ENCODE measurements at regions of chr13 and their contacts with region 1.

Region 1: GRCh38 chr13:99656092-99656745 is 154.9 kb downstream of the TM9SF2 start:
- DNase-seq: peak; percentile 48 to 91 (median 81)
- H3K4me3 ChIP-seq: peak overlapping the region in 24 of 59 donors; percentile 0 to 44 (median 12)
- H3K27ac ChIP-seq: peak overlapping the region in 9 of 59 donors; percentile 1 to 98 (median 38)
- H3K27me3 ChIP-seq: no peaks in the 10 kb centered on the region
- CTCF ChIP-seq: peak; percentile 83 to 98 (median 95)

Region 2: DNA sequence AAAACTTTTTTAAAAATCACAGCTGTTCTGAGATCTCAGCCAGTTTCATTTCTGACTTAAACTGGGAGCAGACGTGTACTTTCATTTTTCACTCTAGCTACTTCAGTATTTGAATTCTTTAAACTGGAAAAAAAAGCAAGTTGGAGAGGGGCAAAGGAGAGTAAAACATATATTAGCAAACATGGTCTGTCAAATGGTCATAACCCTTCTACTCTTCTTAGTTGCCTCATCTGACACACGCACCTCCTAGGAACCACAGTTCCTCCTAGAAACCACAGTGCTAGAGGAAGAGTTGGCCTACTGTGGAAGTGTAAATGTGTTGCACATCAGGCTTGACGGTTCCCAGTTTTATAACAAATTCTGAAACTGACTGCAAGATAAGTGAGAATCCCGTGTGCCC is 107.8 kb before region 1 on chr13:
- intact Hi-C with region 1: no loop called
- DNase-seq: no peak
- H3K4me3 ChIP-seq: no peak overlapping the region
- H3K27ac ChIP-seq: no peak overlapping the region
- H3K27me3 ChIP-seq: no peaks in the 10 kb centered on the region
- CTCF ChIP-seq: no peak

Region 3: DNA sequence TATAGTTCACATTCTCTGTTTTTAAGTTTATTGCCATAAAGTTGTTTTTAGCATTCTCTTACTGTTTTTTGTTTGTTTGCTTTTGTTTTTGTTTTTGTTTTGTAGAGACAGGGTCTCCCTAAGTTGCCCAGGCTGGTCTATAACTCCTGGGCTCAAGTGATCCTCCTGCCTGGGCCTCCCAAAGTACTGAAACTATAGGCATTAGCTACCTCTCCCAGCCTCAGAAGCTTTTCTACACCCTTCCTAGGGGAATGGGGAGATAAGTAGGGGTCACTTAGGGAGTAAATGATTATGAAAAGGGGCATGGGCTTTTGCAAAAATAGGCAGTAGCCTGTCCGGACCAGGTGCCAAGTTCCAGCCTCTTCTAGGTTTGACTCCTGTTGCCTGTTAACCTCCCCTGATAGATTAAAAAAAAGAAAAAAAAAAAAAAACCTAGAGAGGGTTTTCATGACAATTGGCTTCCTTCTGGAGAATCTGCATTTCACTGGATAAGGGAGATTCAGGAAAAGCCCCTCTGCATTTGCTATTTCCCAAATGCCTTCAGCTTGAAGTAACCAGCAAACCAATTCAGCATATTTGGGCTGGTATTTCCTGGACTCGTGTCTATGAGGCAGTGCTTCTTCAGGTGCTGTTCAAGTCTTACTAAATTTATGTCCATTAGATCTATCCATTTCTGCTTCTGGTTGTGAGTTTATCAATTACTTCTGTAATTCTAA is 61.9 kb after region 1 on chr13:
- intact Hi-C with region 1: no loop called
- DNase-seq: no peak
- H3K4me3 ChIP-seq: no peak overlapping the region
- H3K27ac ChIP-seq: no peak overlapping the region
- H3K27me3 ChIP-seq: no peaks in the 10 kb centered on the region
- CTCF ChIP-seq: no peak

Region 4: GRCh38 chr13:100088644-100089464 is 432.6 kb after region 1 on chr13 and contains the start of gene PCCA:
- intact Hi-C with region 1: loop called in 1 of 2 experiments (anchors 2 kb)
- DNase-seq: peak; percentile 90 to 97 (median 95)
- H3K4me3 ChIP-seq: peak within 1 kb of the TSS; percentile 67 to 100 (median 94)
- H3K27ac ChIP-seq: peak within 1 kb of the TSS in 55 of 59 donors; percentile 1 to 93 (median 78)
- H3K27me3 ChIP-seq: no peaks in the 10 kb centered on the region
- CTCF ChIP-seq: peak in 32 of 56 donors; percentile 4 to 52 (median 24)
- total RNA-seq, gene PCCA: 48.8 to 105 (median 68.6) TPM

Region 5: GRCh38 chr13:100235311-100235901 is 579.2 kb after region 1 on chr13:
- intact Hi-C with region 1: loop called (anchors 2 to 5 kb)
- DNase-seq: no peak
- H3K4me3 ChIP-seq: peak overlapping the region in 19 of 59 donors; percentile 1 to 29 (median 8)
- H3K27ac ChIP-seq: peak overlapping the region in 1 of 59 donors; percentile 31
- H3K27me3 ChIP-seq: no peaks in the 10 kb centered on the region
- CTCF ChIP-seq: peak; percentile 59 to 90 (median 74)

Region 6: DNA sequence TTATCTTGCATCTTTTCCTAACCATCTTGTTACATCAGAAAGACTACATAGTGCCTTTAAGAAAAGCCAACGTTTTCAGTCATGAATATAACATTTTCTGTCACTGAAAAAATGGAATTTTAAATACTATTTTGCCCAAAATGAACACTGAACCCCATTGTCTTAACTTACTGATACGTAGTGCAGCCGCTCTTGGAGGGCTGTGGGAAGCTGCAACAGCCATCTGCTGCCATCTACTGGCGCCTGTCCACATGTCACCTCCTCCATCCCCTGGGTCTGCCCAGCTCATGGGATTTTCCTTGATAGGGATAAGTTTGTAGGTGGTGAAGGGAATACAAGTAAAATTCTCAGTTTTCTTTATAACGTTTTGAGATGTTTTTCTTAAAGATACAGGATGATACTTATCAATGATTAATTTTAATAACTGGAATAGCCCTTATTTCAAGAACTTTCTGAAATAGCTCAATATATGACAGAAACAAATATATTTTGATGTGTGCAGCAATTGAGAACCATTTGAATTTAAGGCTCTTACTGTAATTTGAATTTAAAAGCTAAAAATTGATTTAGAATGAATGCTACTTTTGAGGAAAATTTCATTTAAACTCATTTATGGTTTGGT is 858.7 kb after region 1 on chr13:
- intact Hi-C with region 1: loop called (anchors 1 to 2 kb)
- DNase-seq: peak; percentile 78 to 92 (median 87)
- H3K4me3 ChIP-seq: peak overlapping the region in 28 of 59 donors; percentile 2 to 51 (median 24)
- H3K27ac ChIP-seq: peak overlapping the region in 42 of 59 donors; percentile 1 to 86 (median 62)
- H3K27me3 ChIP-seq: no peaks in the 10 kb centered on the region
- CTCF ChIP-seq: peak; percentile 43 to 96 (median 90)

Region 7: GRCh38 chr13:100625456-100625855 is 969.2 kb after region 1 on chr13:
- intact Hi-C with region 1: loop called in 1 of 2 experiments (anchors 10 kb)
- DNase-seq: no peak
- H3K4me3 ChIP-seq: peak overlapping the region in 1 of 59 donors; percentile 7
- H3K27ac ChIP-seq: peak overlapping the region in 20 of 59 donors; percentile 2 to 59 (median 20)
- H3K27me3 ChIP-seq: no peaks in the 10 kb centered on the region
- CTCF ChIP-seq: no peak

Region 8: GRCh38 chr13:100987953-100988352 is 1331.7 kb after region 1 on chr13:
- intact Hi-C with region 1: loop called in 1 of 2 experiments (anchors 5 kb)
- DNase-seq: peak in 1 of 10 donors; percentile 12
- H3K4me3 ChIP-seq: peak overlapping the region in 1 of 59 donors; percentile 38
- H3K27ac ChIP-seq: no peak overlapping the region
- H3K27me3 ChIP-seq: peaks cover 0 to 1% (median 0%) of the 10 kb centered on the region in 45 donors
- CTCF ChIP-seq: peak in 53 of 56 donors; percentile 23 to 68 (median 47)

Region 9: GRCh38 chr13:101127741-101128353 is 1471.6 kb after region 1 on chr13:
- intact Hi-C with region 1: loop called in 1 of 2 experiments (anchors 10 kb)
- DNase-seq: peak in 2 of 10 donors; percentile 23 to 34
- H3K4me3 ChIP-seq: no peak overlapping the region
- H3K27ac ChIP-seq: no peak overlapping the region
- H3K27me3 ChIP-seq: no peaks in the 10 kb centered on the region
- CTCF ChIP-seq: peak; percentile 51 to 89 (median 75)